ENCODE measurements at regions of chr14 and their contacts with region 1.

Region 1: GRCh38 chr14:76812211-76813044 is at the start of gene ANGEL1:
- DNase-seq: peak; percentile 97
- H3K4me3 Mint-ChIP-seq: peak within 1 kb of the TSS; percentile 91
- H3K27ac Mint-ChIP-seq: peak within 1 kb of the TSS; percentile 81
- H3K4me1 Mint-ChIP-seq: peaks cover 24% of the 10 kb centered on the region
- H3K27me3 Mint-ChIP-seq: no peaks in the 10 kb centered on the region
- total RNA-seq, gene ANGEL1: 17.0 to 19.8 TPM

Region 2: DNA sequence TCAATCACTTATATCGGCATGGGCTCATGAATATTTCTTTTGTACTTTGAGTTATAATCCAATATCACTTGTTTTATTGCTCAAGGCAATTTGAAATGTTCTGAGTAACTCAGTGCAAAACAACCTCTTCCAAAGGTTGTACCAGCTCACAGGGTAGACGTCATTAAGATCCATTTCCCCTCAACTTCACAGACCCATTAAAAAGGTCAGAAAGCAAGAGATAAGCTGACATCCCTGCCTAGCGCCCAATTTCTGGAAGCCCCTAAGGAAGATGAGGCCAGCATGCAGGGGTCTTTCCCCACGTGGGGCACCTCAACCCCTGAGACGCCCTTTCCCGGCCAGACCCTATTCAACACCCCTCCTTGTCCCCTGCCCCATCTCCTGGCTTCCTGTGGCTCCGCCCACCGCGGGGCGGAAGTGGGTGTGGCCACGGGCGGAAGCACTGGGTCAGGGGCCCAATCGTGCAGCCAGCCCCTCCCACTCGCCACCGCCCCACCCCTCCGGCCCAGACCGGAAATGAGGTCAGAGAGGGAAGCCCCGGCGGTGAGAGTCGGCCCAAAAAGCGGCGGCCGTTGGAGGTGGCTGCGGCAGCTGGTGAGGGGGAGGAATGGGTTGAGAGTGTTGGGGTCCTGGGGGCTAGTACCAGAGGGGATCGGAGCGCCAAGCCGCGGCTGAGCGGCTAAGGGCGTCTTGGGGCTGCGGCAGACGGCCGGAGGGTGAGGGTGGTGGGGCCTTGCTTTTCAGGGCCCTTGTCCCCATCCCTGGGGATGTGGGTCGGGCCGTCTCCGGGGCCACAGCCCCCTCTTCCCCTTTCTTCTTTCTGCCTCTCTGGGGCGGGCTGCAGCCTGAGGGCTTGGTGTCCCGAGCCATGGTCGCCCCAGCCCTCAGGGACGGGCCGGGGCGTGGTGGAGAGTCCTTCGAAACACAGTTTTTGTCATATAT is 660.8 kb before region 1 on chr14 and contains the start of gene GPATCH2L:
- CTCF ChIA-PET with region 1: no interaction called
- intact Hi-C with region 1: loop called (anchors 2 kb)
- DNase-seq: peak; percentile 99
- H3K4me3 Mint-ChIP-seq: peak within 1 kb of the TSS; percentile 98
- H3K27ac Mint-ChIP-seq: peak within 1 kb of the TSS; percentile 97
- H3K4me1 Mint-ChIP-seq: peaks cover 48% of the 10 kb centered on the region
- H3K27me3 Mint-ChIP-seq: no peaks in the 10 kb centered on the region
- total RNA-seq, gene GPATCH2L: 40.0 to 43.4 TPM

Region 3: GRCh38 chr14:76337635-76338545 is 474.5 kb before region 1 on chr14:
- CTCF ChIA-PET with region 1: no interaction called
- intact Hi-C with region 1: no loop called
- DNase-seq: no peak
- H3K4me3 Mint-ChIP-seq: no peak overlapping the region
- H3K27ac Mint-ChIP-seq: no peak overlapping the region
- H3K4me1 Mint-ChIP-seq: no peaks in the 10 kb centered on the region
- H3K27me3 Mint-ChIP-seq: peaks cover 10% of the 10 kb centered on the region

Region 4: GRCh38 chr14:76767681-76768656 is 44.5 kb before region 1 on chr14:
- CTCF ChIA-PET with region 1: interaction called, 4 read pairs
- intact Hi-C with region 1: loop called (anchors 1 kb)
- DNase-seq: peak; percentile 91
- H3K4me3 Mint-ChIP-seq: peak overlapping the region; percentile 1
- H3K27ac Mint-ChIP-seq: peak overlapping the region; percentile 6
- H3K4me1 Mint-ChIP-seq: peaks cover 14% of the 10 kb centered on the region
- H3K27me3 Mint-ChIP-seq: peaks cover 21% of the 10 kb centered on the region

Region 5: DNA sequence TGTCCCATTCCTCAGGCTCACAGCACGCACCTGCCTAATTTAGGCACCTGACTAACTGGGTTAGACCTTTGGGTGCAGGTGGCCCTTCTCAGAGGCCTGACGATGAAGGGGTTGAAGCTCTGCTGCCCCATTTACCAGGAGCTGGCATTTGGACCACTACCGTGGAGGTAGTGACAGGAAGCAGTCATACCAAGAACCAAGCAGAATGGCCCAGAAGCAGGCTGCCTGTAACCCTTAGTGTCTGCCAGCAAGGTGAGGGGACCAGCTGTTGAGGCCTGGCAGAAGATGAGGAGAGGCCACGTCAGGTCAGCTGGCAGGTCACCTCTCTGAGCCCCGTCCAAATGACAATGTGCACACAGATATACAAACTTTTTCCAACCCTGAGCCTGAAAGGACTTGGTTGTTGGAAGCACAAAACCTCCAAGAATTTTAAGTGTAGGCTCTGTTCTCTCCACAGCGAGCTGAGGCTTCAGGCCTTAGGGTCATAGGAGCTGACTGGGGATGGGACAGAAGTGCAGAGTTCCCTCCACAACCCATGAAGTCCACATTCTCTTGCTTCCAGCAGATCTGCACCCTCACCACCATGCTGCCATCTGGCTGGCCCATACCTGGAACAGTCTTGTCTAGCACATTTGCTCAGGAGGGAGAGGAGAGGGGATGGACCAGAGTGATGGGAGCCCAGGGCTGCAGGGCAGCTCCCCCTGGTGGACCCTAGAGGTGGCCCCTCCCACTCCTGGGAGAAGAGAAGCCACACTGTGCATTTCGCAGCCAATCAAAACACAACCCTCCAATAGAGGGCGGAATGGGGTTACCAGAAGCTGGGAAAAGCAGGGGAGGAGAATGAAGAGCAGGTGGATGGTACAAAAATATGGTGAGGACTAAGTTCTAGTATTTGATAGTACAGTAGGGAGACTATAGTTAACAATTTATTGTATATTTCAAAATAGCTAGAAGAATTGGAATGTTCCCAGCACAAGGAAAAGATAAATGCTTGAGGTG is 27.9 kb before region 1 on chr14:
- CTCF ChIA-PET with region 1: interaction called, 13 read pairs
- intact Hi-C with region 1: loop called (anchors 2 kb)
- DNase-seq: peak; percentile 80
- H3K4me3 Mint-ChIP-seq: no peak overlapping the region
- H3K27ac Mint-ChIP-seq: no peak overlapping the region
- H3K4me1 Mint-ChIP-seq: peaks cover 19% of the 10 kb centered on the region
- H3K27me3 Mint-ChIP-seq: no peaks in the 10 kb centered on the region

Region 6: GRCh38 chr14:76832503-76832988 is 20.1 kb after region 1 on chr14:
- CTCF ChIA-PET with region 1: no interaction called
- intact Hi-C with region 1: no loop called
- DNase-seq: no peak
- H3K4me3 Mint-ChIP-seq: no peak overlapping the region
- H3K27ac Mint-ChIP-seq: no peak overlapping the region
- H3K4me1 Mint-ChIP-seq: no peaks in the 10 kb centered on the region
- H3K27me3 Mint-ChIP-seq: no peaks in the 10 kb centered on the region

Region 7: GRCh38 chr14:76844223-76844622 is 31.8 kb after region 1 on chr14:
- CTCF ChIA-PET with region 1: no interaction called
- intact Hi-C with region 1: loop called (anchors 1 kb)
- DNase-seq: peak; percentile 86
- H3K4me3 Mint-ChIP-seq: peak overlapping the region; percentile 32
- H3K27ac Mint-ChIP-seq: peak overlapping the region; percentile 72
- H3K4me1 Mint-ChIP-seq: peaks cover 8% of the 10 kb centered on the region
- H3K27me3 Mint-ChIP-seq: no peaks in the 10 kb centered on the region

Region 8: GRCh38 chr14:76997256-76997970 is 185.0 kb after region 1 on chr14:
- CTCF ChIA-PET with region 1: no interaction called
- intact Hi-C with region 1: no loop called
- DNase-seq: no peak
- H3K4me3 Mint-ChIP-seq: no peak overlapping the region
- H3K27ac Mint-ChIP-seq: no peak overlapping the region
- H3K4me1 Mint-ChIP-seq: peaks cover 31% of the 10 kb centered on the region
- H3K27me3 Mint-ChIP-seq: no peaks in the 10 kb centered on the region